Naive thymus-derived CD8-positive, alpha-beta T cell (primary cell): ENCODE measurements at regions of chr1 and their contacts with region 1.

Region 1: GRCh38 chr1:42958488-42959319 is at the start of gene SLC2A1:
- DNase-seq: peak; percentile 88 to 98 (median 94)
- ATAC-seq: peak; percentile 81 to 87
- H3K4me3 Mint-ChIP-seq: peak within 1 kb of the TSS; percentile 94 to 100 (median 98)
- H3K27ac Mint-ChIP-seq: peak within 1 kb of the TSS; percentile 92 to 99 (median 98)
- H3K4me1 Mint-ChIP-seq: peaks cover 27 to 73% (median 59%) of the 10 kb centered on the region in 4 donors
- H3K27me3 Mint-ChIP-seq: no peaks in the 10 kb centered on the region
- polyA plus RNA-seq, gene SLC2A1: 17.7 to 22.8 (median 22.0) TPM

Region 2: DNA sequence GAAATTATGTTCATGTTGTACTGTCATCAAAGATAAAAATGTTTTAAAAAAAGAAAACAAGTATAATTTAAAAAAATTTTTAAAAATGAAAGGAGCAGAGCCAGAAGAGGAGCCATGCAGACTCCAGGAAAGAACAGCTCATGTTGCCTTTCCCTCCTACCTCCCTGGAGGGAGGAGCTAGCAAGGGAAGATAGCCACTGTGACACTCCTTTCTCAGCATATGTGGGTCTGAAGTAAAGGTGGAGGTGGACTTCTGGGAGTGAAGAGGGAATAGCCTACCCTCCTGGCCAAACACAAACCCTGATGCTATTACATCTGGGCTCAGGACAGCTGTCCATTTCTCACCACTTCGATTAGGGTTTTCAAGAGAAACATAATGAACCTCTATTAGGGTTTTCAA is 54.3 kb before region 1 on chr1:
- POLR2A ChIA-PET with region 1: no interaction called
- DNase-seq: no peak
- ATAC-seq: no peak
- H3K4me3 Mint-ChIP-seq: no peak overlapping the region
- H3K27ac Mint-ChIP-seq: no peak overlapping the region
- H3K4me1 Mint-ChIP-seq: no peaks in the 10 kb centered on the region
- H3K27me3 Mint-ChIP-seq: peaks cover under 1 to 7% (median 6%) of the 10 kb centered on the region in 5 donors

Region 3: DNA sequence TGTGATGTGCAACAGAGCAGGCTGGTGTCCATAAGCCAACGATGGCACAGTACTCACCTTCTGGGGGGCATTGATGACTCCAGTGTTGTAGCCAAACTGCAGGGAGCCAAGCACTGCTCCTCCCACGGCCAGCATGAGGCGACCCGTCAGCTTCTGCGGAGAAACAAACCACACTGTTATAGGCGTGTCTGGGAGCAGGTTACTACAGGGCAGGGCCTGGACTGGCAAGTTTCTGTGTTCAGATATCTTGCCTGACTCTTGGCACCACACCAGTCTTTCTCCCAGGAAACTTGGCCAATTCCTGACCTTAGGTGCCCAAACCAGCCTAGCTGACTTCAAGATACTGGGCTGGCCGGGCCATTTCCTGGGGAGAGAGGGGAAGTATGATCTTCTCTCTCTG is 15.5 kb before region 1 on chr1:
- POLR2A ChIA-PET with region 1: interaction called, 26 read pairs
- DNase-seq: peak in 1 of 10 donors; percentile 35
- ATAC-seq: peak; percentile 33 to 85
- H3K4me3 Mint-ChIP-seq: peak overlapping the region in 8 of 10 donors; percentile 53 to 82 (median 64)
- H3K27ac Mint-ChIP-seq: peak overlapping the region; percentile 63 to 91 (median 84)
- H3K4me1 Mint-ChIP-seq: peaks cover 59 to 99% (median 97%) of the 10 kb centered on the region in 4 donors
- H3K27me3 Mint-ChIP-seq: no peaks in the 10 kb centered on the region